ENCODE measurements at regions of chr13 and their contacts with region 1.

Region 1: GRCh38 chr13:105112561-105112960 is 1422.9 kb downstream of the EFNB2 start:
- DNase-seq: no peak
- ATAC-seq: no peak
- H3K4me3 ChIP-seq: no peak overlapping the region
- H3K27ac ChIP-seq: no peak overlapping the region
- H3K4me1 ChIP-seq: no peaks in the 10 kb centered on the region
- H3K27me3 ChIP-seq: no peaks in the 10 kb centered on the region
- CTCF ChIP-seq: no peak
- EP300 ChIP-seq: no peak
- POLR2A ChIP-seq: no peak
- RAD21 ChIP-seq: no peak

Region 2: DNA sequence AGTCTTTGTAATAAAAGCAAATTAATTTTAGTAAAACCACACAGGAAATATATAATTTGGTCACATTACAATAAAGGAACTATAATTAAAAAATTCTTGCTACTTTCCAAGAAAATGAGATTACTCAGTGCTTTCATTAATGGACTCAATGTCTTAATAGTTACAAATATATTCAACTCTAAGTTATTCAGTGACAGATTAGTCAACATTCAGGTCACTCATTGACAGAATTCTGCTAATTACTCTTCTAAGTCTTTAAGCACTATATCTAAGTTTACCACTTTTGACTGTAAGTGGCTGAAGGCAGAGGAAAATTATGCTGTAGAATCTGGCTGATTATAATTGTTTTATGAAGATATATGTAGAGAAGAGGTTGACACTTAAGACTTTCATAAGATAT is 57.9 kb after region 1 on chr13:
- CTCF ChIA-PET with region 1: no interaction called
- POLR2A ChIA-PET with region 1: no interaction called
- RAD21 ChIA-PET with region 1: no interaction called
- SMC1A ChIA-PET with region 1: no interaction called
- in situ Hi-C with region 1: no loop called
- intact Hi-C with region 1: loop called (anchors 5 kb)
- DNase-seq: no peak
- ATAC-seq: no peak
- H3K4me3 ChIP-seq: no peak overlapping the region
- H3K27ac ChIP-seq: no peak overlapping the region
- H3K4me1 ChIP-seq: peaks cover 3% of the 10 kb centered on the region; the same call in 1 of the 2 replicates
- H3K27me3 ChIP-seq: no peaks in the 10 kb centered on the region
- CTCF ChIP-seq: no peak
- EP300 ChIP-seq: no peak
- POLR2A ChIP-seq: no peak
- RAD21 ChIP-seq: no peak